Esophagus muscularis mucosa (tissue), 4 donors: ENCODE measurements at regions of chr18 and their contacts with region 1.

Region 1: GRCh38 chr18:11995445-11996189 is 14.3 kb downstream of the IMPA2 start:
- DNase-seq: no peak
- H3K4me3 ChIP-seq: peak overlapping the region in 1 of 4 donors; percentile 21
- H3K27ac ChIP-seq: peak overlapping the region; percentile 22 to 77 (median 48)
- H3K4me1 ChIP-seq: peaks cover 38 to 68% (median 48%) of the 10 kb centered on the region in 4 donors
- H3K27me3 ChIP-seq: no peaks in the 10 kb centered on the region
- CTCF ChIP-seq: peak; percentile 74 to 83 (median 81)
- EP300 ChIP-seq: no peak
- POLR2A ChIP-seq: no peak

Region 2: GRCh38 chr18:11719621-11720020 is 276.0 kb before region 1 on chr18:
- intact Hi-C with region 1: no loop called
- DNase-seq: no peak
- H3K4me3 ChIP-seq: no peak overlapping the region
- H3K27ac ChIP-seq: no peak overlapping the region
- H3K4me1 ChIP-seq: no peaks in the 10 kb centered on the region
- H3K27me3 ChIP-seq: no peaks in the 10 kb centered on the region
- CTCF ChIP-seq: no peak
- EP300 ChIP-seq: no peak
- POLR2A ChIP-seq: no peak

Region 3: DNA sequence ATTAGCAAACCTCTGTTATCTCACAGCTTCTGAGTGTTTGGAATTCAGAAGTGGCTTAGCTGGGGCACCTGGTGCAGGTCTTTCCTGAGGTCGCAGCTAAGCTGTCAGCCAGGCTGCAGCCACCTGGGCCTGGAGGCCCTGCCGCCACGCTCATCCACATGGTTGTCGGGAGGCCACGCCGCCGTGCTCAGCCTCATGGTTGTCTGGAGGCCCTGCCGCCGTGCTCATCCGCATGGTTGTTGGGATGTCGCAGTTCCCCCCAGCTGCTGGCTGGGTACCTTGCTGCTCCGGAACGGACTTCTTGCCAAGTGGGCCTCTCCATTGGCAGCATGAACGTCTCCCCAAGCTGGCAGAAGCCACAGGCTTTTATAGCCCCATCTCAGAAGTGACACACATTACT is 63.2 kb before region 1 on chr18:
- intact Hi-C with region 1: no loop called
- DNase-seq: no peak
- H3K4me3 ChIP-seq: no peak overlapping the region
- H3K27ac ChIP-seq: no peak overlapping the region
- H3K4me1 ChIP-seq: no peaks in the 10 kb centered on the region
- H3K27me3 ChIP-seq: no peaks in the 10 kb centered on the region
- CTCF ChIP-seq: no peak
- EP300 ChIP-seq: no peak
- POLR2A ChIP-seq: no peak

Region 4: DNA sequence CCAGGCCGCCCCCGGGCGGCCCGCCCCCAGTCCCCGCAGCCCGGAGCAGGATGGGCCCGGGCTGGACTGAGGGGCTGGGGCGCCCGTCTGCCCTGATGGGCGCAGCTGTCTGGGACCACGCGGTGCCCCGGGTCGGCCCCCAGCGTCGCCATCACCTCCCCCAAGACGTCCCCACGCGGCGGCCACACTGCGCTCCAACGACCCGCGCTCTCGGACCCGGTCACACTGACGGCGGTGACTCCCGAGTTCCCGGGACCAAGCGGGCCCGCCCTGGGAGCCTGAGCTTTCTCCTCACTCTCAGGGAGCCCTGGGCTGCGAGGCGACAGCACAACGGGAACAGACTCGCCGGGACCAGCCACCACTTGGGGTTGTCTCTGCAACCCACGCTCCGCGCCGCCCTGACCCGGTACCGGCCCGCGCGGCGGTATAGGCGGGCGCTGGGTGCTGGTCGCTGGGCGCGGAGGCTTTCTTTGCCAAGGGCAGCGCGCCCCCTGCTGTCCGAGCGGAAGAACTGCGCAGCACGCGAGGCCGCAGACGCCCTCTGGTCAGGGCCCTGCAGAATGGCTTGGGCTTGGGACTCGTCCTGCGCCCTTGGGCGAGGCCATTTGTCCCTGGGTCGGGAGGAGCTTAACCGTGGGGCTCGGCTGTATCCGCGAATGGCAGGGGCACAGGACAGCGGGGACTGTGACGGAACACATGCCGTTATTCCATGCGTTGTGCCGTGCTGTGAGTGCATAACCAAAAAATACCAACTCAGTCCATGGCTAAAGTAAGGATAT is 43.2 kb after region 1 on chr18:
- intact Hi-C with region 1: loop called (anchors 5 kb)
- DNase-seq: peak; percentile 94
- H3K4me3 ChIP-seq: peak overlapping the region; percentile 59 to 66 (median 62)
- H3K27ac ChIP-seq: peak overlapping the region in 3 of 4 donors; percentile 37 to 60 (median 48)
- H3K4me1 ChIP-seq: peaks cover 10 to 21% (median 16%) of the 10 kb centered on the region in 4 donors
- H3K27me3 ChIP-seq: no peaks in the 10 kb centered on the region
- CTCF ChIP-seq: peak in 2 of 3 experiments; percentile 97 to 98
- EP300 ChIP-seq: no peak
- POLR2A ChIP-seq: no peak

Region 5: GRCh38 chr18:13447626-13448334 is 1452.2 kb after region 1 on chr18:
- intact Hi-C with region 1: no loop called
- DNase-seq: no peak
- H3K4me3 ChIP-seq: peak overlapping the region; percentile 18 to 36 (median 24)
- H3K27ac ChIP-seq: peak overlapping the region in 2 of 4 donors; percentile 7 to 9
- H3K4me1 ChIP-seq: peaks cover 44 to 49% (median 44%) of the 10 kb centered on the region in 4 donors
- H3K27me3 ChIP-seq: no peaks in the 10 kb centered on the region
- CTCF ChIP-seq: no peak
- EP300 ChIP-seq: no peak
- POLR2A ChIP-seq: no peak